HEK293 (cell line): ENCODE measurements at regions of chr22 and their contacts with region 1.

Region 1: GRCh38 chr22:33302049-33302545 is 243.9 kb upstream of the SYN3 start:
- H3K4me3 ChIP-seq: no peak overlapping the region
- H3K27ac ChIP-seq: no peak overlapping the region
- H3K4me1 ChIP-seq: no peaks in the 10 kb centered on the region
- CTCF ChIP-seq: peak; percentile 75

Region 2: DNA sequence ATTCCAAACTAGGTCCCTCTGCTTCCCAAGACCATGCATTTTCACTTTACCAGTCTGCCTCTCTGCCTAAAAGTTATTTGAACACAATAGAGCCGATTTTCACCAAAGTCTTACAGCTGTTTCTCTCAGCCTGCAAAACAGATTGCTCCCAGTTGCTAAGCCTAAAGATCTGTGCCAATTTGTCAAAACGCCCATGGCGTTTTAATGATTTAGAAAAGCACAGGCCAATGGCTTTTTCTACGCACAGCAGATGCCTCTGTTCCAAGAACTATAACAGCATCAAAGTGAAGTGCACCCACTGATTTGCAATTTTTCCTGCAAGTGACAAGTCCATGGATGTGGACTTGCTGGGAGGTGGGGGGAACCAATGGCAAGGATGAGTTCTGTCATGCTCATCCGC is 70.0 kb before region 1 on chr22:
- CTCF ChIA-PET with region 1: no interaction called
- POLR2A ChIA-PET with region 1: no interaction called
- H3K4me3 ChIP-seq: no peak overlapping the region
- H3K27ac ChIP-seq: no peak overlapping the region
- H3K4me1 ChIP-seq: no peaks in the 10 kb centered on the region
- CTCF ChIP-seq: no peak

Region 3: GRCh38 chr22:33288078-33288477 is 14.0 kb before region 1 on chr22:
- CTCF ChIA-PET with region 1: interaction called, 12 read pairs
- POLR2A ChIA-PET with region 1: no interaction called
- H3K4me3 ChIP-seq: no peak overlapping the region
- H3K27ac ChIP-seq: no peak overlapping the region
- H3K4me1 ChIP-seq: no peaks in the 10 kb centered on the region
- CTCF ChIP-seq: no peak

Region 4: DNA sequence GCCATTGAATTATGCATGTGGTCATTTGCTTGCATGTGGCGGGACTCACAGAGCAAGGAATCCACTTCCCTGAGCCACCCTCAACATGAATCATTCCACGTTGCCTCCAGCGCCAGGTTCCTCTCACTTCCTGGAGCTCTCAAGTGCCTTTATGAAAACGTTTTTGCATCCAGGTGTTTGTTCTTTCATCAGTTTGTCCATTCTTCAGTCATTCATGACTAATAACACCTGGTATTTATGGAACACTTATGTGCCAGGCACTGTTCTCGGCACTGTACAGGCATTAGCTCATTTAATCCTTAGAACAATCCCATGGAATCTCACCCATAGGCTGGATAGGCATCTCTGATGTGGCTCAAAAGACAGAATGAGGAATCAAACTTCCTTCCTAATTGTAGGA is 12.2 kb after region 1 on chr22:
- CTCF ChIA-PET with region 1: interaction called, 14 read pairs
- POLR2A ChIA-PET with region 1: no interaction called
- H3K4me3 ChIP-seq: no peak overlapping the region
- H3K27ac ChIP-seq: no peak overlapping the region
- H3K4me1 ChIP-seq: no peaks in the 10 kb centered on the region
- CTCF ChIP-seq: no peak

Region 5: DNA sequence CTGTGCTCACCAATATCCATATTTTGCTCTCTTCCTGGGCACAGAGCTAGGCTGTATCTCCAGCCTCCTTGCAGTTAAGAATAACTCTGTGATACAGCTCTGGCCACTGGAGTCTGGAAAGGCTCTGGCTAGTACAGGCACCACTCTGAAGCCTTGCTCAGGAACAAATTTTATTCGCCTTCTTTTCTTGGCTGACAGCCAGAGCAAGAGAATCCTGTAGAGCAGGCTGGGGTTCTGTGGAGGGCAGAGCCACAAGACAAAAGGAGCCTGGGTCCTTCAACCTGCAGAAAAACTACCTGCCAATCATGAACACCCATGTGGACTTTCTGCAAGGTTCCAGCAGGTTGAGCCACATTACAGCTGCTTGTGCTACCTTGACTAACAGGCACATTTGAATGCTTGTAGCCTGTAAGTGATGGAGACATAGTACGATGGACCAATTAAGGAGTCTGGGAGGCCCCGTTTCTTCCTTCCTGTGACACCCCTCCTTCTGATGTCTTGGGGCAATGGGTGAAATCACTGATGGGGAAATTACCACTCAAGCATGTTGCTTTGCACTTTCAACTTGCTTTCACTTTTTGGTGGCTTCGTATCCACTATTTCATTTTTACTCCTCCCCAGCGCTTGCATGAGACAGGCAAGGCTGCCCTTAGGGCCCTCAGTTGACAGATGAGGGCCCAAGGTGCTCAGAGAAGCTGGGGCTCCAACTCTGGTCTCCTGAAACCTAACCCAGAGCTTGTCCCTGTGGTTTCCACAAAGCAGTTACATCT is 23.3 kb after region 1 on chr22:
- CTCF ChIA-PET with region 1: interaction called, 11 read pairs
- POLR2A ChIA-PET with region 1: no interaction called
- H3K4me3 ChIP-seq: no peak overlapping the region
- H3K27ac ChIP-seq: no peak overlapping the region
- H3K4me1 ChIP-seq: no peaks in the 10 kb centered on the region
- CTCF ChIP-seq: no peak

Region 6: DNA sequence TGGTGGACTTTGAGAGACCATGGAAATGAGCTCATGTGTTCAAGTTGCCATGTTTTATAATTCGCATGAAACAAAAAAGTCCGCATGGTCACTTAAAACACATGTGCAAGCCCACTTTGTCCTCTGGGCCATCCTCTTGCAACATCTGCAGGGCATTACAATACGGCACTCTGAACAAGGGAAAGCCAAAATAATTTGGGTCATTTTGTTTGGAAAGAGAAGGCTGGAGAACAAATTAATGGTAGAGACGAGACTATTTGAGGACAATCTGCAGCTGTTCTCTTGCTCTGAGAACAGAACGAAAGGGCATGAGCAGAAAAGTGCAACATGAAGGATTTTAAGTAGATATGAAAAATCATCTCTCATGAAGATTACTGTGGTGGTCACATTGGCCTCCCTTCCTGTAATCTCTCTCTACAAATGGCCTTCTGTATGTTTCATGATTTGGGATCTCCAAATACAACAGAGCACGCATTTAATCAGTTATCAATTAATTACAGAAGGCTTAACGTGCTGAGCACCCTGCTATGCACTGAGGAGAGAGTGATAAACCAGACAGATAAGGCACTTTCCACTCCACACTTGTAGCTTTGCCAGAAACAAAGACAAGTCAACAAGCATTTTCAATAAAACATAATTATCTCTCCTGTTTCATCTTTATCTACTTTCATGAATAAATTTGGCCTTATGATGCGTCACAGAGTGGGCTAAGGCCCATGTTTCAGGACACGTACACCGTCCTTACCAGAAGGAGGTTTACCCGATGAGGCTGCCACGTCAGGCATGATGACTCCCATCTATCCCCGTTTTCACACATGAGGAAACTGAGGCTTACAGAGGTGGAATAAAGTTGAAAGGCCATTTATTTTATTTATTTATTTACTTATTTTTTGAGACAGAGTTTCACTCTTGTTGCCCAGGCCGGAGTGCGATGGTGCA is 234.1 kb after region 1 on chr22:
- CTCF ChIA-PET with region 1: no interaction called
- POLR2A ChIA-PET with region 1: no interaction called
- H3K4me3 ChIP-seq: no peak overlapping the region
- H3K27ac ChIP-seq: no peak overlapping the region
- H3K4me1 ChIP-seq: no peaks in the 10 kb centered on the region
- CTCF ChIP-seq: no peak

Region 7: DNA sequence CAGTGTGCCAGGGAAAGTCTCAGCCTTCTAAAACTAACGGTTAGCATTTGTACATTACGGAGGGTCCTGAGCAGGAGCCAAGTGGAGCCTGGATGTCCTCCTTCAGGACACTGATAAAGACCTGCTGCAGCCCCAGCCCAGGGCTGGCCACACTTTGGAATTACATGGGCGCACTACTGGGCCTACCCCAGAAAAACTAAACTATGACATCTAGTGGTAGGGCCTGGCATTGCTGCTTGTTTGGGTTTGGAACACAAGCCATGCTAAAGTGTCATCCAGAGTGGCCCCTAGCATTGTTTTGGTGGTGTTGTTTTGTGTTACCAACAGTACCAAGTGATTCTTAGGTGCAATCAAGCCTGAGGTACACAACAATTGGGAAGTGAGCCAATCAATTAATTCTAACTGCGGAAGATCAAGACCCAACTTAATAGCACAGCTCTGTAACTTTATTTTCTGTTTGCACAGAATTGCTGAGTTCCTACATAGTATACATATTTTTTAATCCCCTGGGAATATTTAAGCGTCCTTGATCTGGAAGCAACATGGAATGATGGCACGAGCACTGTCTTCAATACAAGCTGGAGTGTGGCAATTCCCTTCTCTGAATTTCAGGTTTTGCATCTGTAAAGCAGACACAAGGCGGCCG is 277.5 kb after region 1 on chr22:
- CTCF ChIA-PET with region 1: interaction called, 17 read pairs
- POLR2A ChIA-PET with region 1: no interaction called
- H3K4me3 ChIP-seq: no peak overlapping the region
- H3K27ac ChIP-seq: no peak overlapping the region
- H3K4me1 ChIP-seq: peaks cover 9% of the 10 kb centered on the region
- CTCF ChIP-seq: peak; percentile 66

Region 8: GRCh38 chr22:34105461-34106062 is 803.5 kb after region 1 on chr22:
- CTCF ChIA-PET with region 1: interaction called, 13 read pairs
- POLR2A ChIA-PET with region 1: no interaction called
- H3K4me3 ChIP-seq: no peak overlapping the region
- H3K27ac ChIP-seq: no peak overlapping the region
- H3K4me1 ChIP-seq: no peaks in the 10 kb centered on the region; the same call in 1 of the 2 replicates
- CTCF ChIP-seq: no peak; the same call in 1 of the 2 replicates